Activated naive CD4-positive, alpha-beta T cell treated with anti-CD3 and anti-CD28 coated beads, Interleukin-2, amount 10 ng/mL, durations not matched to agents 7 days and 5 days (primary cell): ENCODE measurements at regions of chr2 and their contacts with region 1.

Region 1: GRCh38 chr2:96407041-96407918 is 71.7 kb downstream of the NCAPH start:
- DNase-seq: peak; percentile 82
- H3K4me3 Mint-ChIP-seq: no peak overlapping the region
- H3K27ac Mint-ChIP-seq: peak overlapping the region; percentile 33
- H3K4me1 Mint-ChIP-seq: peaks cover 25% of the 10 kb centered on the region
- H3K27me3 Mint-ChIP-seq: peaks cover 16% of the 10 kb centered on the region

Region 2: GRCh38 chr2:96301865-96302264 is 105.4 kb before region 1 on chr2:
- CTCF ChIA-PET with region 1: no interaction called
- DNase-seq: no peak
- H3K4me3 Mint-ChIP-seq: no peak overlapping the region
- H3K27ac Mint-ChIP-seq: no peak overlapping the region
- H3K4me1 Mint-ChIP-seq: peaks cover 70% of the 10 kb centered on the region
- H3K27me3 Mint-ChIP-seq: peaks cover 3% of the 10 kb centered on the region

Region 3: DNA sequence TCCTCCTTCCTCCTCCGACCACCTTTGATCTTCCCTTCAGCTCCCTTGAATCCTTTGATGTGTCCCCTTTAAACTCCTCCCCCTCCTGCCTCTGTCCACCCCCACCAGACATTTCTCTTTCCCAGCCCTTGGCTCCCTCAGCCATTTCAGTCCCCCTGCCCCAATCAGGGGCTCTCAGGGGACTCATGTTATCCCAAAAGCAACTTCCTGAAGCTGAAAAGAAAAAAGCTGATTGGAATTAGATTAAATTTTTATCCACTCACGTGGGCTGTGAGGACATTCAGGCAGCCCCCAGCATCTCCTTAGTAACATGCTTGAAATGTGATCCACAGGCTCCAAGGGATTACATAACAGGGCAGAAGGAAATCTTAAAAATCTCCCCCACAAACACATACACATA is 16.5 kb after region 1 on chr2:
- CTCF ChIA-PET with region 1: interaction called, 11 read pairs
- DNase-seq: no peak
- H3K4me3 Mint-ChIP-seq: no peak overlapping the region
- H3K27ac Mint-ChIP-seq: no peak overlapping the region
- H3K4me1 Mint-ChIP-seq: peaks cover 6% of the 10 kb centered on the region
- H3K27me3 Mint-ChIP-seq: peaks cover 57% of the 10 kb centered on the region

Region 4: DNA sequence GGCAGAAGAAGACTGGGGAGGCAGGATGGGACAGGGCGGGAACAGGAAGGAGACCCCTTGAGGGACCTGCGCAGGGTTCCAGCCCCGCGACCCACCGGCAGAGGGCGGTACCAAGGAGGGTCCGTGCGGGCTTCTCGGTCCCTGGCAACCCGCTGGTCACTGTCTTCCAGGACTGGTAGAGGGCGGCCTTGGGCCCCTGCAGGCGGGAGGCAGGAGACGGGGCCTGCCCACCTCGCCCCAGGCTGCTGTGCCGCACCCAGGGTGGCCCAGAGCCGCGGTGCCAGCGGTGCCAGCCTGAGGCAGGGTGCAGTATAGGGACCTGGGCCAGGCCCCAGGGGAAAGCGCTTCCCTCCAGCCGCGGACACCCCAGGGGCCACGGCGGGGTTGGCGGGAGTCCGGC is 63.4 kb after region 1 on chr2:
- CTCF ChIA-PET with region 1: interaction called, 11 read pairs
- DNase-seq: peak; percentile 61
- H3K4me3 Mint-ChIP-seq: no peak overlapping the region
- H3K27ac Mint-ChIP-seq: no peak overlapping the region
- H3K4me1 Mint-ChIP-seq: peaks cover 3% of the 10 kb centered on the region
- H3K27me3 Mint-ChIP-seq: peaks cover 13% of the 10 kb centered on the region

Region 5: GRCh38 chr2:96509114-96509846 is 102.0 kb after region 1 on chr2:
- CTCF ChIA-PET with region 1: interaction called, 158 read pairs
- DNase-seq: peak; percentile 73
- H3K4me3 Mint-ChIP-seq: peak overlapping the region; percentile 33
- H3K27ac Mint-ChIP-seq: no peak overlapping the region
- H3K4me1 Mint-ChIP-seq: peaks cover 20% of the 10 kb centered on the region
- H3K27me3 Mint-ChIP-seq: peaks cover 39% of the 10 kb centered on the region

Region 6: GRCh38 chr2:96554293-96555145 is 147.2 kb after region 1 on chr2:
- CTCF ChIA-PET with region 1: interaction called, 53 read pairs
- DNase-seq: peak; percentile 76
- H3K4me3 Mint-ChIP-seq: peak overlapping the region; percentile 10
- H3K27ac Mint-ChIP-seq: peak overlapping the region; percentile 49
- H3K4me1 Mint-ChIP-seq: peaks cover 26% of the 10 kb centered on the region
- H3K27me3 Mint-ChIP-seq: peaks cover 6% of the 10 kb centered on the region